Activated B cell treated with CpG ODN at 0.5 μM for 24 hours (primary cell): ENCODE measurements at regions of chr17 and their contacts with region 1.

Region 1: DNA sequence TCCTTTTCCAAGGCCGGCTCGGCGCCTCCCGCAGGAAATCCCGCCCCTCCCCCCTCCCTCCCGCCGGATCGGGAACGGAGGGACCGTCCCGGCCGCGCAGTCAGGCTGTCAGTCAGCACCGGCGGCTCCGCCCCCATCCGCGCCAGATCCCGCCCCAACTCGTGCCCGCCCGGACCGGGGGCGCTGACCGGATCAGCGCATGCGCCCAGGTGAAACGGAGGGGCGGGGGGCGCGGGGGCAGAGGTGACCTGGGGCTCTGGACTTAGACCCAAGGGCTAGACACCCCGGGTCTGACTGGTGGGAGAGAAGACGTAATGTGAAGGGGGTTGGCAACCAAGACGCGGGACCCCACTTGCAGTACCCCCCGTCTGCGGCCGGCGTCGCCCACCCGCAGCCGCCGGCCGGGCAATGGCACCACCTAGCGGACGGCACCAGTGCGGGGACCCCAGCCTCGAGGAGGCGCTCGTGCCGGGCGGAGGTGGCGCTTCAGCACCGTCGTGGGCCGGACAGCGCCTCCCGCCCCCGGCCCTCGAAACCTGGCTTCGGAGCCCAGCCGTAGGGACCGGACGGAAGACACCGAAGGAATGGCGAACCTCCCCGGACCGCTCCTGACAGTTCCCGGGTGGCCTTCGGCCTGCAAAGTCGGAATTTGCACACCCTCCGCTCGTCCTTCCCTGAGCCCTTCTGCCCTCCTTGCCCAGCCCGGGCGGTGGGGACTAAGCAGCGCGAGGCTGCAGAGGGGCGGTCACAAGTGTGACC is at the start of gene CASKIN2:
- DNase-seq: peak; percentile 80
- ATAC-seq: peak; percentile 68
- H3K4me3 Mint-ChIP-seq: peak within 1 kb of the TSS; percentile 82
- H3K27ac Mint-ChIP-seq: no peak within 1 kb of the TSS
- H3K4me1 Mint-ChIP-seq: peaks cover 22% of the 10 kb centered on the region
- H3K27me3 Mint-ChIP-seq: no peaks in the 10 kb centered on the region
- CTCF ChIP-seq: peak; percentile 43
- total RNA-seq, gene CASKIN2: 1.2 and 1.4 TPM in 2 replicates

Region 2: DNA sequence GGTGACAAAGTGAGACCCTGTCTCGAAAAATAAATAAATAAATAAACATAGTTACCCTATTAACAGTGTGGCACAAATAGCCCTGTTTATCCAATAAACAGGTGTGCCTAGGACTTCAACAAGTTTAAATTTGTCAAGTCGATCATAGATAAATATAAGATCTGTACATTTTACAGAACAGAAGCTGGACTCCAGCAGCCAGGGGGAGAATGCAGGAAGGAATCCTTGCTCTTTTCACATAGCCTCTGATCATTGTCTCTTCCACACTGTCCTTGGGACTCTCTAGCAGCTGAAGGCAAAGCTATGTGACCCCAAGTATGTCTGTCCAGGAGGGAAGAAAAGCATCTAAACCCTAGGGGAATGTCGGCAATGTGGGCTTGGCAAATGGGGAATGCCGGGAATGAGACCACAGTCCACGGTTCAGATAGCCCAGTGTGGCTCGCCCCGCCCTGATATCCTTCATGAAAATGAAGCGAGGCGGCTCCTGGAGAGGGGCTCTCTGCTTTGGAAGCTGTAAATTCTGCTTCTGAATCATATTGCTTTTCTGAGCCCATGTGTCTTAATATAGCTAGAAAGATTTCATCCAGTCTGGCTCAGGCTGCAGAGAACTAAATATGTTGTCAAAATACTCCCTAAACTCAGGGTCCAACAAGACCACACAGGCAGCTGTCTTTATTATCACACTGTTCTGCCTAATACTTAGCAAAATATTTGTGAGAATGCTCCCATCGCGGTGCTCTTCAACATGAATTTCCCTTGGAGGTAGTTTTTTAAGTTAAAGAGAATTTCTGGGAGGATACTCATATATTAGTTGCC is 85.3 kb before region 1 on chr17:
- CTCF ChIA-PET with region 1: no interaction called
- POLR2A ChIA-PET with region 1: no interaction called
- intact Hi-C with region 1: loop called (anchors 1 kb)
- DNase-seq: no peak
- ATAC-seq: no peak
- H3K4me3 Mint-ChIP-seq: no peak overlapping the region
- H3K27ac Mint-ChIP-seq: no peak overlapping the region
- H3K4me1 Mint-ChIP-seq: peaks cover 10% of the 10 kb centered on the region
- H3K27me3 Mint-ChIP-seq: peaks cover 9% of the 10 kb centered on the region
- CTCF ChIP-seq: no peak

Region 3: DNA sequence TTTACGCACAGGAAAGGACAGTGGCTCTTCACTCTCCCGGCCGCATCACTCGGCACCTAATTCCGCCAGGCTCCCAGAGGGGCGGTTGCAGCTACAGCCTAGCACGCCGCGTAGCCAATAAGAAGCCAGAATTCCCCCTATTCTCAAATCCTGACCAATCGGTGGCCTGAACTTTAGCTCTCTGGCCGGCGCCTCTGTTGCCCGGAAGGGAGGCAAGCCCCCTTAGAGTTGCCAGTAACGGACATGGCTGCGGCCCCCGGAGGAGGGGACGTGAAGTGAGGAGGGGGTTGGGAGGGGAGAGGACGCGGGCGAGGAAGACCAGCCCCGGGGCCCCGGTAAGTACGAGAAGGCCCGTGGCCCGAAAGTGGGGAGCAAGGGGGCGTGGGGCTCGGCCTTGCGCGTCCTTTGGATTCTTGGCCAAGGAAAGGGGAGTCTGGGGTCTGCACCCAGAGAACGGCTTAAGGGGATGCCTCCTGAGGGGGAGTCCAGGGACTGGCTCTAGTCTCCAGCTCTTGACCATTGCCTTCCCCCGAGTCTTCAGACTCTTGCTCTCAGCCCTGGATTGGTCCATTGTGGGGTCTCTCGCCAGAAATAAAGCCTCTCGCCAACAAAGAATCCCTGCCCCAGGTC is 59.1 kb before region 1 on chr17 and contains the start of gene TMEM94:
- CTCF ChIA-PET with region 1: interaction called, 3 read pairs
- POLR2A ChIA-PET with region 1: interaction called, 15 read pairs
- intact Hi-C with region 1: loop called (anchors 2 kb)
- DNase-seq: peak; percentile 74
- ATAC-seq: peak; percentile 94
- H3K4me3 Mint-ChIP-seq: peak within 1 kb of the TSS; percentile 91
- H3K27ac Mint-ChIP-seq: peak within 1 kb of the TSS; percentile 88
- H3K4me1 Mint-ChIP-seq: peaks cover 41% of the 10 kb centered on the region
- H3K27me3 Mint-ChIP-seq: no peaks in the 10 kb centered on the region
- CTCF ChIP-seq: no peak
- total RNA-seq, gene TMEM94: 80.3 and 86.6 TPM in 2 replicates

Region 4: DNA sequence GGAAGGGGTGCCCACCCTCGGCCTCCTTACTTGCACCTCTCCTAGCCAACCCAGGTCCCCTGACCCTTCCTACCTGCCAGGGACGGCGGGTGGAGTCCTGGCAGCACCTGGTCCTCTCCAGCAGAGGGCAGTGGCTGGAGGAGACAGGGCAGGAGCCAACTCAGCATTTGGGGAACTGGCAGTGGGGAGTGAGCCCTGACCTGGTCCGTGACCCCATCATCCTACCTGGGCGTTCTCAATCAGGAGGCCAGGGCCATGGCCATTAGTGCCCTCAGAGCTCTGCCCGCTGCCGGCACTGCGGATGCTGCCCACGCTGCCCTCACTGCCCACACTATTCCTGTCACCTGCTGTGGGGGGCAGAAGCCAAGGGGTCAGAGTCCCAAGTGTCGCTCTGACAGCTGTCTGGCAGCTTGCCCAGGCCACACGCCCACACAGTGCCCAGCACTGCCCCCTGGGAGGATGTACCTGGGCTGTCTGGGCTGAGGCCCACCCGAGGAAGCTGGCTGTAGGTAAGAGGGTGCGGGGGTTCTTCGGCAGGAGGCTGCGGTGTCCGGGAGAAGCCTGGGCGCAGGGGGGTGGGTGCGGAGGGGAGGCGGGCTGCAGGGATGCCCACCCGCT is 11.2 kb before region 1 on chr17:
- CTCF ChIA-PET with region 1: interaction called, 4 read pairs
- POLR2A ChIA-PET with region 1: interaction called, 4 read pairs
- intact Hi-C with region 1: loop called (anchors 1 kb)
- DNase-seq: peak; percentile 41
- ATAC-seq: peak; percentile 91
- H3K4me3 Mint-ChIP-seq: no peak overlapping the region
- H3K27ac Mint-ChIP-seq: no peak overlapping the region
- H3K4me1 Mint-ChIP-seq: peaks cover 2% of the 10 kb centered on the region
- H3K27me3 Mint-ChIP-seq: no peaks in the 10 kb centered on the region
- CTCF ChIP-seq: no peak

Region 5: DNA sequence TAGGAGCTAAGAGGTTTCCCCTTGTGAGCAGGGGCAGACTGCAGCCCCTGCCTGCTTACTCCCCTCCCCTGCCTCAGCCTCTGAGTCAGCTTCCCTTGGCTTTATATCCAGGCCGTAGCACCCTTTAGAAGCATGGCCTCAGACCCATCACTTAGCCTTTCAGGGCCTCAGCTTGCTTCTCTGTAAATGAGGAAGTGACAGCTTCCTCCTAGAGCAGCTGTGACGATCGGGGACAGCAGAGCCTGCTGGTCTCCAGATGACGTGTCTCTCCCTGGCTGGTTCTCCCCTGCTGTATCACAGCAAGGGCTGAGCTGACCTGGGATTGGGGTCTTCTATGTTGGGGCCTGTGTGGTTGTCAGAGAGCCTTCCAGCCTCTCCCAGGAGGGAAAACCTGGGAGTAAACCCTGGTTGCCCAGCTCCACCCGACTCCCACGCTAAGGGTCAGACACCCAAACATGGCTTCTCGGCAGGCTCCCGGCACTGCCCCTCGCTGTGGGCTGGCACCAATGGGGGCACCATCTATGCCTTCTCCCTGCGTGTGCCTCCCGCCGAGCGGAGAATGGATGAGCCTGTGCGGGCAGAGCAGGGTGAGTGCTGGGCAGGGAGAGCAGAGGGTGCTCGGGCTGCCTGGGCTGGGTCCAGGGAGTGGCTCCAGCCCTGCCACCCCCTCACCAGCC is 55.7 kb after region 1 on chr17:
- CTCF ChIA-PET with region 1: interaction called, 3 read pairs
- POLR2A ChIA-PET with region 1: interaction called, 11 read pairs
- intact Hi-C with region 1: loop called (anchors 1 kb)
- DNase-seq: peak; percentile 56
- ATAC-seq: peak; percentile 98
- H3K4me3 Mint-ChIP-seq: peak overlapping the region; percentile 64
- H3K27ac Mint-ChIP-seq: peak overlapping the region; percentile 92
- H3K4me1 Mint-ChIP-seq: peaks cover 22% of the 10 kb centered on the region
- H3K27me3 Mint-ChIP-seq: no peaks in the 10 kb centered on the region
- CTCF ChIP-seq: no peak

Region 6: DNA sequence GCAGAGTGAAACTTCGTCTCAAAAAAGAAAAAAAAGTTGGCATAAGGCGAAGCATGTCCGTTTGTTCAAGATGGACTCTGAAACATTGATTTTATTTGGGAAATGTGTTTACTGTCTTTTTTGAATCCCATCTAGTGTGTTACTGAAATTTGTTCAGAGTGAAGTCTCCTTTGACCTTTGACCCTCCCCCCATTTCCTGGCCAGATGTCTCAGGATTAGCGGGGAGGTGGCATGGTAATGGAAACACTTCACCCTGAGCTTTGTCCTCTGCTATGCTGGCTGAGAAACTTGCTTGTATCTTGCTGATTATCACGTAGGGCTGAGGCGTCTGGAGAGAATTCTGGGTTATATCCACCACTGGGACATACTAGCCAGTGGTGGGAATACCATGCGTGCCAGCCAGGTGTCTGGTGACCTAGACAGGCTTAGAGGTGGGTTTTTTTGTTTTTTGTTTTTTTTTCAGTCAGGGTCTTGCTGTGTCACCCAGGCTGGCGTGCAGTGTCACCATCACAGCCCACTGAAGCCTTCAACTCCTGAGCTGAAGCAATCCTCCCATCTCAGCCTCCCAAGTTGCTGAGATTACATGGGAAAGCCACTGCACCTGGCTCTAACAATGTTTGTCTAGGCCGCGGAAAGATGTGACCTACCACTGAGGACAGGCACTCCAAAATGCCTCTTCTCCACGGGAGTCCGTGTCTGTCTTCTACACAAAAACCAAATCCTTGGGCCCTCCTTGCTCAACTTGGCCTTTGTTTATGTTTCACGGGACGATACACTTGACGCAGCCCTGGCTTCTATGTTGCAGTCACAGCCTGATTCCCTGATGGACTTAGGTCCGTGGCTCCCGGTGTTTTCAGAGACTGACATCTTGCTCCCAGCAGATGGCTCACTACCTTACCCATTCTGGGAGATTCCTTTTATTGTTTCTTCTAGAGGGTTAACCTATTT is 255.9 kb after region 1 on chr17:
- CTCF ChIA-PET with region 1: no interaction called
- POLR2A ChIA-PET with region 1: interaction called, 11 read pairs
- intact Hi-C with region 1: no loop called
- DNase-seq: no peak
- ATAC-seq: no peak
- H3K4me3 Mint-ChIP-seq: no peak overlapping the region
- H3K27ac Mint-ChIP-seq: no peak overlapping the region
- H3K4me1 Mint-ChIP-seq: peaks cover 15% of the 10 kb centered on the region
- H3K27me3 Mint-ChIP-seq: no peaks in the 10 kb centered on the region
- CTCF ChIP-seq: no peak